ENCODE measurements at regions of chr12 and their contacts with region 1.

Region 1: GRCh38 chr12:49232940-49233841 is 31.7 kb upstream of the TUBA1C start:
- DNase-seq: peak; percentile 71
- H3K4me3 ChIP-seq: peak overlapping the region in 1 of 3 experiments; percentile 5
- H3K27ac ChIP-seq: no peak overlapping the region
- H3K4me1 ChIP-seq: peaks cover 12% of the 10 kb centered on the region
- H3K27me3 ChIP-seq: no peaks in the 10 kb centered on the region
- CTCF ChIP-seq: peak in 1 of 2 donors; percentile 34
- POLR2A ChIP-seq: no peak

Region 2: GRCh38 chr12:47837190-47838171 is 1395.7 kb before region 1 on chr12:
- CTCF ChIA-PET with region 1: no interaction called
- POLR2A ChIA-PET with region 1: no interaction called
- dilution Hi-C with region 1: no loop called
- intact Hi-C with region 1: no loop called
- DNase-seq: peak; percentile 70
- H3K4me3 ChIP-seq: no peak overlapping the region
- H3K27ac ChIP-seq: no peak overlapping the region
- H3K4me1 ChIP-seq: no peaks in the 10 kb centered on the region
- H3K27me3 ChIP-seq: no peaks in the 10 kb centered on the region
- CTCF ChIP-seq: peak; percentile 75 to 80
- POLR2A ChIP-seq: no peak

Region 3: GRCh38 chr12:48767047-48767446 is 466.1 kb before region 1 on chr12:
- CTCF ChIA-PET with region 1: no interaction called
- POLR2A ChIA-PET with region 1: no interaction called
- dilution Hi-C with region 1: no loop called
- intact Hi-C with region 1: no loop called
- DNase-seq: no peak
- H3K4me3 ChIP-seq: no peak overlapping the region
- H3K27ac ChIP-seq: no peak overlapping the region
- H3K4me1 ChIP-seq: no peaks in the 10 kb centered on the region
- H3K27me3 ChIP-seq: no peaks in the 10 kb centered on the region
- CTCF ChIP-seq: no peak
- POLR2A ChIP-seq: no peak

Region 4: GRCh38 chr12:49088190-49088931 is 144.8 kb before region 1 on chr12:
- CTCF ChIA-PET with region 1: interaction called, 29 read pairs
- POLR2A ChIA-PET with region 1: interaction called, 4 read pairs
- dilution Hi-C with region 1: no loop called
- intact Hi-C with region 1: loop called (anchors 1 kb)
- DNase-seq: peak; percentile 91
- H3K4me3 ChIP-seq: no peak overlapping the region
- H3K27ac ChIP-seq: no peak overlapping the region
- H3K4me1 ChIP-seq: peaks cover 39% of the 10 kb centered on the region
- H3K27me3 ChIP-seq: no peaks in the 10 kb centered on the region
- CTCF ChIP-seq: peak; percentile 90 to 95
- POLR2A ChIP-seq: no peak

Region 5: GRCh38 chr12:49110464-49111155 is 122.6 kb before region 1 on chr12 and contains the start of gene LMBR1L:
- CTCF ChIA-PET with region 1: interaction called, 10 read pairs
- POLR2A ChIA-PET with region 1: no interaction called
- dilution Hi-C with region 1: no loop called
- intact Hi-C with region 1: no loop called
- DNase-seq: peak; percentile 98
- H3K4me3 ChIP-seq: peak within 1 kb of the TSS; percentile 36 to 92 (median 68)
- H3K27ac ChIP-seq: peak within 1 kb of the TSS; percentile 36
- H3K4me1 ChIP-seq: peaks cover 20% of the 10 kb centered on the region
- H3K27me3 ChIP-seq: no peaks in the 10 kb centered on the region
- CTCF ChIP-seq: peak in 1 of 2 donors; percentile 43
- POLR2A ChIP-seq: peak; percentile 74
- total RNA-seq, gene LMBR1L: 92.8 and 106 TPM in 2 replicates

Region 6: DNA sequence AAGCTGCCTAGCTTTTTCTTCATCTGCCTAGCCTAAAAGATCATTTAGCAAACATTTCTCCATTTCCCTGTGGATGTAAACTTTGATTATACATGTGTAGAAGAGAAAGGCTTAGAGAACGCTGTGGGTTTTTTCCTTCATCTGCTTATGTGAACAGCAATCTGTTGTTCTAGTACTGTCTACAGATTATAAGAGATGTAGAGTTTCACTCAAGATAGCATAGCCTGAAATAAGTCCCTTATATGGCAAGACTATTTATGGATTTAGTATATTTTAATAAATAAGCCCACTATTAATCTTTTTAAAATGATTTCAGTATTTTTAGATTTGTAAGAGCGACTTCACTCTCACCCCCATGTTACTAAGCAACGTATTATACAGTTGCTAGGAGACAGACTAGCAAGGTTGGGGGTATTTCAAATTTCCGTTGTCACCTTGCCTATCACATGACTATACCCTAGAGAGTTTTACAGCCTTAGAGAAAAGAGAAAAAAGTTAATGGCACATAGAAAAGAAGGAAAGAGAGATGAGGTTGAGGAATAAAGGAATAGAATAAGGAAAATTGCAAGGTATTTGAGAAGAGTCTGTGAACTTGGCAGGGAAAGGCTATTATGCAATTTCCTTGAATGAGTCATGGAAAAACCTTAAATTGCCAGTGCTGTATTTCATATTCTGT is 32.1 kb before region 1 on chr12:
- CTCF ChIA-PET with region 1: no interaction called
- POLR2A ChIA-PET with region 1: no interaction called
- dilution Hi-C with region 1: no loop called
- intact Hi-C with region 1: loop called (anchors 1 kb)
- DNase-seq: peak; percentile 93
- H3K4me3 ChIP-seq: peak overlapping the region in 1 of 3 experiments; percentile 44
- H3K27ac ChIP-seq: peak overlapping the region; percentile 74
- H3K4me1 ChIP-seq: peaks cover 33% of the 10 kb centered on the region
- H3K27me3 ChIP-seq: no peaks in the 10 kb centered on the region
- CTCF ChIP-seq: no peak
- POLR2A ChIP-seq: no peak

Region 7: GRCh38 chr12:49264738-49265515 is 31.7 kb after region 1 on chr12 and contains the start of gene TUBA1C:
- CTCF ChIA-PET with region 1: interaction called, 6 read pairs
- POLR2A ChIA-PET with region 1: interaction called, 5 read pairs
- dilution Hi-C with region 1: no loop called
- intact Hi-C with region 1: loop called (anchors 2 kb)
- DNase-seq: peak; percentile 89
- H3K4me3 ChIP-seq: peak within 1 kb of the TSS; percentile 68 to 95 (median 83)
- H3K27ac ChIP-seq: peak within 1 kb of the TSS; percentile 83
- H3K4me1 ChIP-seq: peaks cover 46% of the 10 kb centered on the region
- H3K27me3 ChIP-seq: no peaks in the 10 kb centered on the region
- CTCF ChIP-seq: no peak
- POLR2A ChIP-seq: peak; percentile 99
- total RNA-seq, gene TUBA1C: 515 and 523 TPM in 2 replicates